CD8-positive, alpha-beta T cell (primary cell): ENCODE measurements at regions of chr19 and their contacts with region 1.

Region 1: DNA sequence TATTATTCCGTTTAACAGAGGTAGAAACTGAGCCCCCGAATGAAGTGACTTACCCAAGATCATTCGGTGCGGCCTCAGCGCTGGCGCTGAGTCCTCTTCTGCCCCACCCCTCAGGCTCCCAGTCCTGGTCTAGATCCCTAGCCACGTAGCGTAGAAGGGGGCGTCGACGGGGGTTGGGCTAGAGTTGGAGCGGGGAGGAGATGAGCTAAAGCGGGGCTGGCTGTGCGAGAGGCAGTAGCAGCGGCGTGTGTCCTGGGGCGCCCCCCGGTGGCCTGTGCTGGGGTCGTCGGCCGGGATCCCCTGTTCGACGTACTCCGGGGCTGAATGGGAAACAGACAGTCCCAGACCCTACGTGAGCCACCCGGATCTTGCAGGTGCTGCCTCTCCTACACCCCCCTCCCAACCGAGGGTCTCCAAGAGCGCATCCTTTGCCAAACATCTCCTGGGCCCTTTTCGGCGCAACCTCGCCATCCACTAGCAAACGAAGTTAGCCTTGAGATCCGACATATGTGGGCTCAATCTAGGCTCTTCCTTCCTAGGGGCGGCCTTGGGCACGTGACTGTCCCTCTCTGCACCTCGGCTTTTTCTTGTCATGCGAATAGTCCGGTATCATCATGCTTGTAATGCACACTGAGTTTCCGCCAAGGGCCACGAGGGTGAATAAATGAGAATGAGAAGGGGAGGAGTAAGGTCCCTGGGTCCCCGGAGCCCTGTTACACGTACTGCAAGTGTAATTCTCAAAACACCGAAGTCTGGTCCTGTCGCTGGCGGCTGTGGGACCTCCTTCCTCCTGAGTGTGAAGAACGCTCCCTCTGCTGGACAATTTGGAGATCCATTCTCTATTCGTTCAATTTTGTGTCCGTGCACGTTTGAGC is 47.7 kb downstream of the CYP4F22 start:
- DNase-seq: peak; percentile 92 to 99 (median 96)
- ATAC-seq: peak; percentile 82
- H3K4me3 ChIP-seq: peak overlapping the region; percentile 41 to 52
- H3K4me3 Mint-ChIP-seq: peak overlapping the region; percentile 83
- H3K27ac ChIP-seq: peak overlapping the region; percentile 64 to 80
- H3K27ac Mint-ChIP-seq: peak overlapping the region; percentile 93
- H3K4me1 ChIP-seq: peaks cover 23% of the 10 kb centered on the region
- H3K4me1 Mint-ChIP-seq: peaks cover 18% of the 10 kb centered on the region
- H3K27me3 ChIP-seq: peaks cover 0 to 4% of the 10 kb centered on the region in 2 experiments
- H3K27me3 Mint-ChIP-seq: no peaks in the 10 kb centered on the region
- CTCF ChIP-seq: peak; percentile 69

Region 2: DNA sequence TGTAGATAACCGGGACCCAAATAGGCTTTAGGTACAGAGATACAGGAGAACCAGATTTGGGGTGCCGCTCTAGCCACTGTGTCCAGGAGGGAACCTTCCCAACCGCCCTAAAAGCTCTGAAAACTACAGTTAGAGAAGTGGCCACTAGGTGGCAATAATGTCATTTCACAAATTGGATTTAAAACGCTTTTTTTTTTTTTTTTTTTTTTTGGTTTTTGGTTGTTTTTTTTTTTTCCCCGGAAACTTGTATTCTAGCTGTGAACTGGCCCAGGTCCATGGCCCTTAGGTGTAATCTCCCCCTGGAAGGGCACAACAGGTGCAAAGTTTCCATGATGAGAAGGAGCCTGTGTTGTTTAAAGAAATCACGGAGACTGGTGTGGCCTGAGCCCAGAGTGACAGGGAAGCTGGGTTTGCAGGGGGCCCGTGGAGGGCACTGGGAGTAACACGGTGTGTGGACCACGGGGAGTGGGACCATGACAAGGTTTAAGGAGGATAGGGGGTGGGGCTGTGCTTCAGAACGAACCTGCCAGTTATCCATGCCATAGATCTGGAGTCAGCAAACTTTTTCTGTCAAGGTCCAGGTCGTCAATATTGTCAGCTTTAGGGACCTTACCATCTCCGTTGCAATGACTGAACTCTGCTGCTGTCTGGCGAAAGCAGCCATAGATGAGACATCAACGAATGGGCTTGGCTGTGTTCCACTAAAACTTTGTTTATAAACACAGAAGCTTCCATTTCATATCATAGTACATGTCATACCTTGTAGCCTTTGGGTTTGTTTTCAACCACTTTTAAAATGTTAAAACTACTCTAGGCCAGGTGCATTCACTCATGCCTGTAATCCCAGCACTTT is 463.9 kb before region 1 on chr19:
- CTCF ChIA-PET with region 1: interaction called, 8 read pairs
- POLR2A ChIA-PET with region 1: no interaction called
- intact Hi-C with region 1: loop called (anchors 1 kb)
- DNase-seq: peak in 7 of 9 experiments; percentile 9 to 86 (median 67)
- ATAC-seq: peak; percentile 49
- H3K4me3 ChIP-seq: no peak overlapping the region
- H3K4me3 Mint-ChIP-seq: no peak overlapping the region
- H3K27ac ChIP-seq: no peak overlapping the region
- H3K27ac Mint-ChIP-seq: no peak overlapping the region
- H3K4me1 ChIP-seq: peaks cover 5% of the 10 kb centered on the region
- H3K4me1 Mint-ChIP-seq: peaks cover 4% of the 10 kb centered on the region
- H3K27me3 ChIP-seq: no peaks in the 10 kb centered on the region
- H3K27me3 Mint-ChIP-seq: peaks cover 10% of the 10 kb centered on the region
- CTCF ChIP-seq: peak; percentile 70

Region 3: DNA sequence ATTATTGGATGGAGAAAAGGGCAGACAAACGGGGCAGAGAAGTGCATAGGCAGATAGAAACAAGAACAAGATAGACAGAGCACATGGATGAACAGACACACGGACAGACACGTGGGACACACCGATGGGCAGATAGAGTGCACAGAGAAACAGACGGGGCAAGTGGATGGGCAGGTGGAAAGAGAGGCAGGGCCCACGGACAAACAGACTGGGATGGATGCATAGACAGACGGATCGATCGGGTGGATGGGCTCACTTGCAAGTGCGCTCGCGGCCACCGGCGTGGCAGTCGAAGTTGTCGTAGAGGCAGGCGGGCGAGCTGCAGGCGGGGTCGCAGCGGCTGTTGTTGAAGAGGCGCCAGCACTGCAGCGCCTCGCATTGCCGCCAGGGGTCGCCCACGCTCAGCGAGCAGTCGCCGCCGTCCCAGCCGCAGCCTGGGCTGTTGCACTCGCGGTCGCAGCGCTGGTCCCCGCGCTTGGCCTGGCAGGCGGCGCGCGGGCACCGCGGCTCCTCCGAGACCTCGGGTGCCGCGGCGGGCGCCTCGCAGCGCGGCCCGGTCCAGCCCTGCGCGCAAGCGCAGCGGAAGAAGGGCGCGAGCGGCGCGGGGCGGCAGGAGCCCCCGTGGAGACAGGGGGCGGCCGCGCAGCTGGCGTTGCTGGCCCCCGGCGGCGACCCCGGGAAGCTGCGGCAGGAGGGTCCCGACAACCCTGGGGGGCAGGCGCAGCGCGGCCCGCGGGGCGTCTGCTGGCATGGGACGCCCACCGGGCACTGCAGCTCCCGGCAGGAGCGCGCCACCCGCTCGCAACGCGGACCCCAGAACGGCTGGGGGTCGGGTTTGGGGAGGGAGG is 378.5 kb before region 1 on chr19:
- CTCF ChIA-PET with region 1: interaction called, 18 read pairs
- POLR2A ChIA-PET with region 1: interaction called, 4 read pairs
- intact Hi-C with region 1: loop called in 1 of 2 experiments (anchors 1 kb)
- DNase-seq: peak; percentile 74 to 91 (median 82)
- ATAC-seq: peak; percentile 98
- H3K4me3 ChIP-seq: no peak overlapping the region
- H3K4me3 Mint-ChIP-seq: peak overlapping the region; percentile 36
- H3K27ac ChIP-seq: no peak overlapping the region
- H3K27ac Mint-ChIP-seq: no peak overlapping the region
- H3K4me1 ChIP-seq: peaks cover 4% of the 10 kb centered on the region
- H3K4me1 Mint-ChIP-seq: peaks cover 4% of the 10 kb centered on the region
- H3K27me3 ChIP-seq: peaks cover 0 to 8% of the 10 kb centered on the region in 2 experiments
- H3K27me3 Mint-ChIP-seq: peaks cover 15% of the 10 kb centered on the region
- CTCF ChIP-seq: peak; percentile 91

Region 4: GRCh38 chr19:15332311-15332996 is 223.5 kb before region 1 on chr19 and contains the start of gene BRD4:
- CTCF ChIA-PET with region 1: interaction called, 4 read pairs
- POLR2A ChIA-PET with region 1: interaction called, 3 read pairs
- intact Hi-C with region 1: loop called (anchors 1 to 2 kb)
- DNase-seq: peak; percentile 58 to 88 (median 77)
- ATAC-seq: peak; percentile 63
- H3K4me3 ChIP-seq: peak within 1 kb of the TSS; percentile 81 to 97
- H3K4me3 Mint-ChIP-seq: peak within 1 kb of the TSS; percentile 95
- H3K27ac ChIP-seq: peak within 1 kb of the TSS; percentile 71 to 83
- H3K27ac Mint-ChIP-seq: peak within 1 kb of the TSS; percentile 96
- H3K4me1 ChIP-seq: peaks cover 42% of the 10 kb centered on the region
- H3K4me1 Mint-ChIP-seq: peaks cover 42% of the 10 kb centered on the region
- H3K27me3 ChIP-seq: no peaks in the 10 kb centered on the region
- H3K27me3 Mint-ChIP-seq: no peaks in the 10 kb centered on the region
- CTCF ChIP-seq: no peak
- total RNA-seq, gene BRD4: 123 to 128 TPM

Region 5: GRCh38 chr19:15393963-15394362 is 162.0 kb before region 1 on chr19:
- CTCF ChIA-PET with region 1: no interaction called
- POLR2A ChIA-PET with region 1: no interaction called
- intact Hi-C with region 1: no loop called
- DNase-seq: no peak
- ATAC-seq: no peak
- H3K4me3 ChIP-seq: no peak overlapping the region
- H3K4me3 Mint-ChIP-seq: no peak overlapping the region
- H3K27ac ChIP-seq: no peak overlapping the region
- H3K27ac Mint-ChIP-seq: no peak overlapping the region
- H3K4me1 ChIP-seq: no peaks in the 10 kb centered on the region
- H3K4me1 Mint-ChIP-seq: peaks cover 14% of the 10 kb centered on the region
- H3K27me3 ChIP-seq: no peaks in the 10 kb centered on the region
- H3K27me3 Mint-ChIP-seq: no peaks in the 10 kb centered on the region
- CTCF ChIP-seq: no peak

Region 6: DNA sequence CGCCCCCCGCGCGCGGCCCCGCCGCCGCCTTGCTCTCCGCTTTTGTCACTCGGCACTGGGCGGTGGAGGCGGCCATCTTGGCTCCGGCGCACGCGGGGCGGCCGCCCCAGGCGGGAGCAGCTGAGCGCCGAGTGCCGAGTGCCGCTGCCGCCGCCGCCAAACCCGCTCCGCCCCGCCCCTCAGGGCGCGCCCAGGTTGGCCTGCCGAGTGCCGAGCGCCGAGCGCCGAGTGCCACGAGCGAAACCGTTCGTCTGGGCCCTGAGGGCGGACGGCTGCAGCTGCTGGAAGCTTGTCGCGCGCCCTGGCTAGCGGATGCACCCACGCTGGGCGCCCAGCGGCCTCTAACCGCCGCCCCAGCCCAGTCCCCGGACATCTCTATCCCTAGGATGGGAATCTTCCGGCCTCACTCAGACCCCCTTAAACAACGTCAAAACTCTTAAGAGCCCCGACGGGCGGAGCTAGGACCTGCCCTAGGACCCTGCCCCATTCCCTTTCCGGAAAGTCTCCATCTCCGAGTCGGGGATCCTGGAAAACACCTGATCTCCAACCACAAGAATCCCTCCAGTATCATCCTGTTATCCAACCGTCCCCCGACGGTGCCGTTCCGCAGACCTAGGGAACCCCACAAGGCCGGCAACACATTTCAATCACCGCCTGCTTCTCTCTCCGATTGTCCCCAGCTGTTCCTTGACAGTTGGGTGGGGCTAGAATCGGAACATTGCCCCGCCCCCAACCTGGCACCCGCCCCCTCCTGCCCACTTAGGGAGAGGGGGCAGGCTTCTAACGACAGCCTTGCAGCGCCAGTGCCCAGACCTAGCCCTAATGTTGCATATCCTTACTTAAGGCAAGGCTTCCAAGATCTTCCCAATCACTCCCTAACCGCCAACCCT is 123.1 kb before region 1 on chr19:
- CTCF ChIA-PET with region 1: interaction called, 14 read pairs
- POLR2A ChIA-PET with region 1: interaction called, 21 read pairs
- intact Hi-C with region 1: loop called (anchors 1 kb)
- DNase-seq: peak; percentile 85 to 96 (median 91)
- ATAC-seq: peak; percentile 95
- H3K4me3 ChIP-seq: peak overlapping the region; percentile 88 to 100
- H3K4me3 Mint-ChIP-seq: peak overlapping the region; percentile 89
- H3K27ac ChIP-seq: peak overlapping the region; percentile 76 to 79
- H3K27ac Mint-ChIP-seq: peak overlapping the region; percentile 87
- H3K4me1 ChIP-seq: peaks cover 31% of the 10 kb centered on the region
- H3K4me1 Mint-ChIP-seq: peaks cover 26% of the 10 kb centered on the region
- H3K27me3 ChIP-seq: no peaks in the 10 kb centered on the region
- H3K27me3 Mint-ChIP-seq: no peaks in the 10 kb centered on the region
- CTCF ChIP-seq: no peak

Region 7: DNA sequence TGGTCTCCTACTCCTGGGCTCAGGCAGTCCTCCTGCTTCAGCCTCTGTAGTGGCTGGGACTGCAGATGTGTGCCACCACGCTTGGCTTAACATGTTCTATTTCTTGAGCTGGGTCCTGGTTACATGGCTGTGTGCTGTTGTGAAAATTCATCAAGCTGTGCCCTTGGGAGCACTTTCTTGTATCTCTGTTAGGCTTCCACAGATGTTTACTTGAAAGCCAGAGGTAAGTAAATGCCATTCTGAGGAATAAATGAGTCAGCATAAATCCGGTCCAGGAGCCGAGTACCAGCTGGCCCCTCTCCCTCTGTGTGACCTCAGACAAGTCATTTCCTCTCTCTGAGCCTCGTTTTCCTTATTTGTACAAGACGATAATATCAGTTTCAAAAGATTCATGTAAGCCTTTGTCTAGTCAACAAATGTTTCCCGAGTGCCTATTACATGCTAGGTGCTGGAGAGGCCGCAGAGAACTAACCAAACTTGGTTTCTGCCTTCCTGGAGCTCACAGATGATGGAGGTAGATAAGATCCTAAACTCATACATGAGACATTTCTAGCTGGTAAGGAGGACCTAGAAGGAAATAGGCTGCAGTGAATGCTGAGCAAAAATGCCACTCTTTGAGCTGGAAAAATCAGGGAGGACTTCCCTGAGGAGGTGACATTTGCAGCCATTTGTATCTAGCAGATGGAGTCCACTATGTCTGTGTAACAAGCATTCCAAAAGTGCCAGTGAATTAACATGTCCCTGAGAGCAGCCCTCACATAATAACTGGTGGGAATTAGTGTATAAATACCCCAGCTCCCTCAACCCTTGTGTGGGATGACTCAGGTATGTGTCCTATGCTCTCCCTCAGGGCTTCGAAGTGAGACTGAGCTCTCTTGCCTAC is 88.9 kb before region 1 on chr19:
- CTCF ChIA-PET with region 1: interaction called, 19 read pairs
- POLR2A ChIA-PET with region 1: interaction called, 22 read pairs
- intact Hi-C with region 1: loop called (anchors 1 kb)
- DNase-seq: peak in 8 of 9 experiments; percentile 32 to 75 (median 59)
- ATAC-seq: peak; percentile 25
- H3K4me3 ChIP-seq: no peak overlapping the region
- H3K4me3 Mint-ChIP-seq: peak overlapping the region; percentile 50
- H3K27ac ChIP-seq: peak overlapping the region in 1 of 2 experiments; percentile 68
- H3K27ac Mint-ChIP-seq: peak overlapping the region; percentile 89
- H3K4me1 ChIP-seq: peaks cover 58% of the 10 kb centered on the region
- H3K4me1 Mint-ChIP-seq: peaks cover 61% of the 10 kb centered on the region
- H3K27me3 ChIP-seq: no peaks in the 10 kb centered on the region
- H3K27me3 Mint-ChIP-seq: no peaks in the 10 kb centered on the region
- CTCF ChIP-seq: no peak

Region 8: DNA sequence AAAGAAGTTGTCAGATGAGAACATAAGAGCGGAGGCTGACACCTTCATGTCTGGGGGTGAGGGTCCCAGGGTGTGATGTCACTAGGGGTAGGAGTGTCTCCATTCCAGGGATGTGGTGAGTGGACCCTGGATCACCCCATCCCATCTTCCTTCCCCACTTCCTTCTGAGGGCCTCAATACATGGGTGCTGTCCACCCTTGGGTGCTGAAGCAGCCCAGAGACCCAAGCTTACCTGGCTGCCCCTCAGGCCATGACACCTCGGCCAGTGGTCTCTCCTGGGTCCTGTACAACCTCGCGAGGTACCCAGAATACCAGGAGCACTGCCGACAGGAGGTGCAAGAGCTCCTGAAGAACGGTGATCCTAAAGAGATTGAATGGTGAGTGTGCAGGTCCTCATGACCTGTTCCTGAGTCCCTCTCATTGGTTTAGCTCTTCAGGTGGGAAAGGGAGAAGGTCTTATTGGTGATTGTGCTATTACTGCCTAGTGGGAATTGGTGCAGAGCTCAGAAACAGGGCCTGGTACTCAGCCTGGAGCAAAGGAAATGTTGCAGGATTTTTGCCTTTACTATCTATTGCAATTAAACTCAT is 21.3 kb after region 1 on chr19:
- CTCF ChIA-PET with region 1: no interaction called
- POLR2A ChIA-PET with region 1: no interaction called
- intact Hi-C with region 1: no loop called
- DNase-seq: no peak
- ATAC-seq: no peak
- H3K4me3 ChIP-seq: no peak overlapping the region
- H3K4me3 Mint-ChIP-seq: no peak overlapping the region
- H3K27ac ChIP-seq: no peak overlapping the region
- H3K27ac Mint-ChIP-seq: no peak overlapping the region
- H3K4me1 ChIP-seq: no peaks in the 10 kb centered on the region
- H3K4me1 Mint-ChIP-seq: no peaks in the 10 kb centered on the region
- H3K27me3 ChIP-seq: peaks cover 0 to 4% of the 10 kb centered on the region in 2 experiments
- H3K27me3 Mint-ChIP-seq: peaks cover 16% of the 10 kb centered on the region
- CTCF ChIP-seq: no peak